Mammary epithelial cell (primary cell): ENCODE measurements at regions of chr2 and their contacts with region 1.

Region 1: GRCh38 chr2:71068218-71069035 is at the start of gene NAGK:
- DNase-seq: peak; percentile 95
- H3K4me3 ChIP-seq: peak within 1 kb of the TSS; percentile 66 to 78 (median 76)
- H3K27ac ChIP-seq: peak within 1 kb of the TSS; percentile 57
- H3K4me1 ChIP-seq: peaks cover 52% of the 10 kb centered on the region
- H3K27me3 ChIP-seq: no peaks in the 10 kb centered on the region
- CTCF ChIP-seq: peak in 1 of 2 donors; percentile 8
- total RNA-seq, gene NAGK: 29.5 to 80.8 TPM

Region 2: DNA sequence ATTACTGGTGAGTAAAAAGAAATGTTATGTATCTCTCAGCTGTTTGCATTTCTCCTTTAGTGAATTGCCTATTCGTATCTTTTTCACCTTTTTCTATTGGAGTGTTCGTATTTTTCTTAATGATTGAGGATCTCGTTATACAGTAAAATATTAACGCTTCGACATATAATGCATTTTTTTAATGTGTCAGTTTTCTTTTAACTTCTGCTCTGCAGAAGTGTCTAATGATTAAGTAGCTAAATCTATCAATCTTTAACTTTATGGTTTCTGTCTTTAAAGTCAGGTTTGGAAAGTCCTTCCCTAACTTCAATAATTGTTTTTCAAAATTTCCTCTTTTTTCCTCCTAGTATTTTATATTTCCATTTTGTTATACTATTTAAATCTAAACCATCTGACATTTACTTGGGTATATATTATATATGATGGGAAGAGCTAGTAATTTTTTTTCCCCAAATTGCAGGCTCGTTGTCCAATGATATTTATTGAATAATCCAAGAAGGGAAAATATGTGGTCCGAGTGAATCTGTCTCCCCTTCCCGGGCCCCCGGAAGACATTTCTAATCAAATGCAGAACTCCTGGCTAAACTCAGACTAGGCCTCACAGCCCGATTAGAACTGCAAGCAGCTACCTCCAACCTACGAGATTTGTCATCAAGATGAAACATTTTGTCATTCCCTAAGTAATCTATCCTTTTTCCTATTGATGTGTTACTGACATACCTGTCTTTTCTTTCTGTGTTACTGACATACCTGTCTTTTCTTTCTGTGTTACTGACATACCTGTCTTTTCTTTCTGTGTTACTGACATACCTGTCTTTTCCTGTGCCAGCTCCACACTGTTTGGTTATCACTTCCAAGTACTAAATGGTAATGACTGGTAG is 964.0 kb before region 1 on chr2:
- CTCF ChIA-PET with region 1: no interaction called
- dilution Hi-C with region 1: no loop called
- in situ Hi-C with region 1: no loop called
- intact Hi-C with region 1: no loop called
- DNase-seq: no peak
- H3K4me3 ChIP-seq: no peak overlapping the region
- H3K27ac ChIP-seq: no peak overlapping the region
- H3K4me1 ChIP-seq: peaks cover 13% of the 10 kb centered on the region
- H3K27me3 ChIP-seq: no peaks in the 10 kb centered on the region
- CTCF ChIP-seq: no peak

Region 3: DNA sequence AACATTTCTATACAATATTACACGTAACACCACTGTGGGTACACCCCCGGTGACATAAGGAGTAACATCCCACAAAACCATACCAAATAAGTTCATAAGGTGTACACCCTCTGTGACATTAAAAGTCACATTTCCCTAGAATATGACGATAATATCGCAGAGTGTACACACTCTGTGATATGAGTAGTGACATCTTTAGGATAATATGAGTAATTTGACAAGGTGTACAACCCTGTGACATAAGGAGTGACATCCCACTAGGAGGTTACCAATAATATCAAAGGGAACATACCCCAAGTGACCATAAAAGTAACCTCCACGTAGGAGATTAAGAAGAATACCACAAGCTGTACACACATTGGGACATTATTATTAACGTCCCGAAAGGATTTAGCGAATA is 49.8 kb before region 1 on chr2:
- CTCF ChIA-PET with region 1: interaction called, 7 read pairs
- dilution Hi-C with region 1: no loop called
- in situ Hi-C with region 1: no loop called
- intact Hi-C with region 1: loop called (anchors 1 kb)
- DNase-seq: no peak
- H3K4me3 ChIP-seq: no peak overlapping the region
- H3K27ac ChIP-seq: no peak overlapping the region
- H3K4me1 ChIP-seq: peaks cover 6% of the 10 kb centered on the region
- H3K27me3 ChIP-seq: no peaks in the 10 kb centered on the region
- CTCF ChIP-seq: no peak

Region 4: GRCh38 chr2:71049365-71050360 is 18.8 kb before region 1 on chr2:
- CTCF ChIA-PET with region 1: interaction called, 9 read pairs
- dilution Hi-C with region 1: no loop called
- in situ Hi-C with region 1: no loop called
- intact Hi-C with region 1: loop called (anchors 2 kb)
- DNase-seq: peak; percentile 77
- H3K4me3 ChIP-seq: no peak overlapping the region
- H3K27ac ChIP-seq: no peak overlapping the region
- H3K4me1 ChIP-seq: peaks cover 6% of the 10 kb centered on the region
- H3K27me3 ChIP-seq: no peaks in the 10 kb centered on the region
- CTCF ChIP-seq: peak; percentile 20 to 56

Region 5: DNA sequence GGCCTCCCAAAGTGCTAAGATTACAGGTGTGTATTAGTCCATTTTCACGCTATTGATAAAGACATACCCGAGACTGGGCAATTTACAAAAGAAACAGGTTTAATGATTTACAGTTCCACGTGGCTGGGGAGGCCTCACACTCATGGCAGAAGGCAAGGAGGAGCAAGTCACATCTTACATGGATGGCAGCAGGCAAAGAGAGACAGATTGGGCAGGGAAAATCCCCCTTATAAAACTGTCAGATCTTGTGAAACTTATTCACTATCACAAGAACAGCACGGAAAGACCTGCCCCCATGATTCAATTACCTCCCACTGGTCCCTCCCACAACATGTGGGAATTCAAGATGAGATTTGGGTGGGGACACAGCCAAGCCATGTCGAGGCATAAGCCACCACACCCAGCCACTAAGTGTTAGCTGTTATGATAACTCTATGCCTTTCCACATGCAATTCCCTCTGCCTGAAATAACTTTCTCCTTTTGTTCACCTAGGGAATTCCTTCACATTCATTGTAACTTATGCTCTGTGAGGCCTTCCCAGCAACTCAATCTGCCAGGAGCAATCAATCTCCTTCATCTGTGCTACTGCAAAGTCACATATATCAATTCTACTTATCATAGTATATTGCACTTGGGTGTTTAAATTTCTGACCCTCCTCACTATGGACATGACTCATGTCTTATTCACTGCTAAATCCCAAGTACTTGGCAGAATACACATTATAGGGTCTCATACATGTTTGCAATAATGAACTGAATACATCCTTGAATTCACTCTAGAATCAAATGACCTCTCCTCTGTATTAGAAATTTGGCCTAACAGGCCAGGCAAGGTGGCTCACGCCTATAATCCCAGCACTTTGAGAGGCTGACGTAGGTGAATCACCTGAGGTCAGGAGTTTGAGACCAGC is 54.2 kb after region 1 on chr2:
- CTCF ChIA-PET with region 1: no interaction called
- dilution Hi-C with region 1: loop called (anchors 5 kb)
- in situ Hi-C with region 1: no loop called
- intact Hi-C with region 1: no loop called
- DNase-seq: no peak
- H3K4me3 ChIP-seq: no peak overlapping the region
- H3K27ac ChIP-seq: no peak overlapping the region
- H3K4me1 ChIP-seq: no peaks in the 10 kb centered on the region
- H3K27me3 ChIP-seq: no peaks in the 10 kb centered on the region
- CTCF ChIP-seq: no peak

Region 6: GRCh38 chr2:71372042-71372441 is 303.6 kb after region 1 on chr2:
- CTCF ChIA-PET with region 1: no interaction called
- dilution Hi-C with region 1: no loop called
- in situ Hi-C with region 1: no loop called
- intact Hi-C with region 1: no loop called
- DNase-seq: no peak
- H3K4me3 ChIP-seq: no peak overlapping the region
- H3K27ac ChIP-seq: no peak overlapping the region
- H3K4me1 ChIP-seq: no peaks in the 10 kb centered on the region
- H3K27me3 ChIP-seq: no peaks in the 10 kb centered on the region
- CTCF ChIP-seq: no peak